ENCODE measurements at regions of chr2 and their contacts with region 1.

Region 1: GRCh38 chr2:197499594-197500526 is at the starts of genes HSPD1 and HSPE1:
- DNase-seq: peak; percentile 97 to 99
- ATAC-seq: peak; percentile 95 to 99 (median 96)
- H3K4me3 ChIP-seq: peak within 1 kb of the TSS; percentile 69 to 97 (median 86)
- H3K27ac ChIP-seq: peak within 1 kb of the TSS; percentile 60 to 98 (median 95)
- H3K4me1 ChIP-seq: peaks cover 3 to 62% (median 51%) of the 10 kb centered on the region in 9 donors
- H3K27me3 ChIP-seq: no peaks in the 10 kb centered on the region
- CTCF ChIP-seq: no peak
- total RNA-seq, gene HSPD1: 104 to 175 (median 135) TPM
- total RNA-seq, gene HSPE1: 73.7 to 157 (median 103) TPM

Region 2: DNA sequence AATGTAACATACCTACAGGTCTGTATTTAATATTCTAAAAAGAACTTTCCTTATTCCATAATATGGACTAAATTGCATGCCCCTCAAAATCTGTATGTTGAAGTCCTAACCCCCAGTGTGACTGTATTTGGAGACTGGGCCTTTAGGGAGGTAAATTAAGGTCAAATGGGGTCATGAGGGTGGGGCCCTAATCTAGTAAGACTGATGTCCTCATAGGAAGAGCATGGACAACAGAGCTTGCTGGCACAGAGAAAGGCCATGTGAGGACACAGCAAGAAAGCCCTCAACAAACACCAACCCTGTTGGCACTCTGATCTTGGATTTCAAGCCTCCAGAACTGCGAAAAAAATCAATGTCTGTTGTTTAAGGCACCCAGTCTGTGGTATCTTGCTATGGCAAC is 83.6 kb before region 1 on chr2:
- intact Hi-C with region 1: loop called in 1 of 10 experiments (anchors 10 kb)
- DNase-seq: no peak
- ATAC-seq: no peak
- H3K4me3 ChIP-seq: no peak overlapping the region
- H3K27ac ChIP-seq: no peak overlapping the region
- H3K4me1 ChIP-seq: peaks cover 0 to 27% (median 4%) of the 10 kb centered on the region in 9 donors
- H3K27me3 ChIP-seq: no peaks in the 10 kb centered on the region
- CTCF ChIP-seq: no peak

Region 3: GRCh38 chr2:197434541-197435513 is 65.0 kb before region 1 on chr2 and contains the start of gene SF3B1:
- intact Hi-C with region 1: loop called in 2 of 10 experiments (anchors 10 kb)
- DNase-seq: peak; percentile 98 to 99
- ATAC-seq: peak; percentile 97 to 99 (median 99)
- H3K4me3 ChIP-seq: peak within 1 kb of the TSS; percentile 69 to 100 (median 88)
- H3K27ac ChIP-seq: peak within 1 kb of the TSS; percentile 90 to 99 (median 96)
- H3K4me1 ChIP-seq: peaks cover 11 to 52% (median 48%) of the 10 kb centered on the region in 9 donors
- H3K27me3 ChIP-seq: no peaks in the 10 kb centered on the region
- CTCF ChIP-seq: no peak
- total RNA-seq, gene SF3B1: 132 to 162 (median 151) TPM

Region 4: DNA sequence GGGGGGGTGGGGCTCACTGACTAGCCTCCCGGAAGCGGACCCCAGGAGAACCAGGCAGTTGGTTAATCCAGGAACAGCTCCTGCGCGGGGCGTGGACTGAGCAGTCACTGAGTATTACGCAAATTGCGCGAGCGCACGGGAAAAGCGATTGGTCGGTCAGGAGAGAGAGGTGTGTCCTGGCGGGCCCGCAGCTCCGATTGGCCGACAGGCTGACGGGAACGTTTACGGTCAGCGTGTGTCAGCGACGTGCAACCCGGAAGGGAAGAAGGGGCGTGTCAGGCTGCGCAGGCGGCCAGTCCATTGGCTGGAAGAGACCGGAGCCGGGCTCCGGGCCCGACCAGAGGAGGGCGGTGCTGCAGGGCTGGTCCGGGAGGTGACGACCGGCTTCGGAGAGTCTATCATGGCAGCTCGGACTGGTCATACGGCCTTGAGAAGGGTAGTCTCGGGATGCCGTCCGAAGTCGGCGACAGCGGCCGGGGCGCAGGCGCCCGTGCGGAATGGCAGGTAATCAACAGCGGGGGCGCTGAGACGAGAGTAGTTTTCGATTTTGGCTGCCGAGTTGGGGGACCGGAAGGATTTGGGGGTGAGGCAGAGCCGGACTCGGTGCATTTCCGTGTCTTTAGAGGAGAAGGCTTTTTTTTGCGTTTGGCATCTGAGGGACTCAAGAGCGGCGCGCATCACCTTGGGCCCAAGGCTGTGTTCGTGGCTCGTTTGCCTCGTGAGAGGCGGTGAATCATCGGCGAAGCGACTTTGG is 46.5 kb before region 1 on chr2 and contains the start of gene COQ10B:
- intact Hi-C with region 1: loop called in 4 of 10 experiments (anchors 1 to 5 kb)
- DNase-seq: peak; percentile 99
- ATAC-seq: peak; percentile 97 to 99 (median 98)
- H3K4me3 ChIP-seq: peak within 1 kb of the TSS; percentile 52 to 92 (median 74)
- H3K27ac ChIP-seq: peak within 1 kb of the TSS; percentile 83 to 100 (median 98)
- H3K4me1 ChIP-seq: peaks cover 0 to 42% (median 20%) of the 10 kb centered on the region in 9 donors
- H3K27me3 ChIP-seq: no peaks in the 10 kb centered on the region
- CTCF ChIP-seq: peak; percentile 4 to 70 (median 42)
- total RNA-seq, gene COQ10B: 25.5 to 44.1 (median 33.0) TPM

Region 5: DNA sequence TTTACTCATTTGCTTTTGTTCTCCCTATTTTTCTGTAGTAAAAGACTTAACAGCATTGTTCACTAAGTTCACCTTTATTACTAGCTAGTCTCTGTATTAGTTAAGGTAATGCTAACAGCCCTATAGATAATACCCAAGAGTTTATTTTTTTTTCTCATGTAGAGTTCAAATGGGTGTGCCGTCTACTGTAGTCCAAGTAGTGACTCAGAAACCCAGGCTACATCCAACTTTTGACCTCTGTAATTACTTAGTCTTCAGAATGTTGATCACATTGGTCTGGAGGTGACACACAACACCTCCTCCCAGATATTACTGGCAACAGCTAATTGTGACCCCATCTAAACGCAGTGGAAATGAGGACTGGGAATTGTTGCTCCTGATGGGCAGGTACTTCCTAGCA is 38.8 kb before region 1 on chr2:
- intact Hi-C with region 1: loop called in 2 of 10 experiments (anchors 5 kb)
- DNase-seq: no peak
- ATAC-seq: peak in 4 of 8 donors; percentile 20 to 76 (median 36)
- H3K4me3 ChIP-seq: no peak overlapping the region
- H3K27ac ChIP-seq: no peak overlapping the region
- H3K4me1 ChIP-seq: peaks cover 3 to 43% (median 12%) of the 10 kb centered on the region in 9 donors
- H3K27me3 ChIP-seq: no peaks in the 10 kb centered on the region
- CTCF ChIP-seq: no peak

Region 6: DNA sequence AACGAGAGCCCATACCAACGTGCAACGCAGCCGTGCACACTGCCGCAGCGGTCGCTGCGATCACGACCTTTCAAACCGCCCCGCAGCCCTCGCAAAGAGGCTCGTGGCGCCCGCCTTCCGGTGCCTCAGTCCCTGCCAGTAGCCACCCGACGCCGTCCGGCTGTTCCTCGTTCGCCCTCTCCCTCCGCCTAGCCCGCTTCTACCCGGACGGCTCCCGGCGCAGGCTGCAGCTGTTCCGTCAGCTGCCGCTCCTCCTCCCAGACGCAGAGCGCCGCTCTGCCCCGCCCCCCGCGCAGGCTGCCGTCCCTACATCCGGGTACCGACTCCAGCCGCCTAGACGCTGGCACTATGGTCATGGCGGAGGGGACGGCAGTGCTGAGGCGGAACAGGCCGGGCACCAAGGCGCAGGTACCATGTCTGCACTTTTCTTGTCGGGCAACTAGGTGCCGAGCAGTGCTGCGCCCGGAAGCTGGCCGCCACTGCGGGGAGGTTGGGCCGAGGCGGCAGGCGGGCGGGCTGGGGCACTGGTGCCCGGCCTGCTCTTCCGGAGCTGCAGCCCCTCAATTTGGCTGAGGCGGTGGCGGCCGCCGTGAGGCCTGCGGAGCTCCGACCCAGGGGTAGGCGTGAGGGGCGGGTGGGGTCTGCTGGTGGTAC is 16.0 kb after region 1 on chr2 and contains the start of gene MOB4:
- intact Hi-C with region 1: loop called in 6 of 10 experiments (anchors 1 to 2 kb)
- DNase-seq: peak; percentile 95 to 97
- ATAC-seq: peak; percentile 98 to 100 (median 99)
- H3K4me3 ChIP-seq: peak within 1 kb of the TSS; percentile 78 to 96 (median 84)
- H3K27ac ChIP-seq: peak within 1 kb of the TSS; percentile 90 to 99 (median 94)
- H3K4me1 ChIP-seq: peaks cover 0 to 43% (median 30%) of the 10 kb centered on the region in 9 donors
- H3K27me3 ChIP-seq: no peaks in the 10 kb centered on the region
- CTCF ChIP-seq: peak in 1 of 9 donors; percentile 23
- total RNA-seq, gene MOB4: 20.9 to 43.2 (median 30.5) TPM

Region 7: DNA sequence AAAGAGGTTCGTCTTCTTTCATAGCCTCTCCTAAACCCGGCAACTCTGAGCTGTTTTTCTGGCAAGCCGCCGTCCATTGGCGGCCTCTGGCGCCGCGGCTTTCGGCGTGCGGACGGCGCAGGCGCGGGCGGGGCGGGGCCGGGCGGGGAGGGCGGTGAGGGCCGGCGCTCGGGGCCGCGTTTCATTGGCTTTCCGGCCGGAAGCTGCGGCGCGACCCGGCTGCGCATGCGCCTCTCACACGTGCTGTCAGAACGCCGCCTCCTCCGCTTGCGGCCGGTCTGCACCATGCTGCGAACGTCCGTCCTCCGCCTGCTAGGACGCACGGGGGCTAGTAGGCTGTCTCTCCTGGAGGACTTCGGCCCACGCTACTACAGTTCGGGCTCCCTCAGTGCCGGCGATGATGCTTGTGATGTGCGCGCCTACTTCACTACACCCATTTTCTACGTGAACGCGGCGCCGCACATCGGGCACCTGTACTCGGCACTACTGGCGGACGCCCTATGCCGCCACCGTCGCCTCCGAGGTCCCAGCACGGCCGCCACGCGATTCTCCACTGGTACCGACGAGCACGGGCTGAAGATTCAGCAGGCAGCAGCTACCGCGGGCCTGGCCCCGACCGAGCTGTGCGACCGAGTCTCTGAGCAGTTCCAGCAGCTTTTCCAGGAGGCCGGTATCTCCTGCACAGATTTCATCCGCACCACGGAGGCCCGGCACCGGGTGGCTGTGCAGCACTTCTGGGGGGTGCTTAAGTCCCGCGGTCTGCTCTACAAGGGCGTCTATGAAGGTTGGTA is 205.5 kb after region 1 on chr2 and contains the start of gene MARS2:
- intact Hi-C with region 1: loop called in 3 of 10 experiments (anchors 2 to 10 kb)
- DNase-seq: peak; percentile 92 to 96
- ATAC-seq: peak; percentile 94 to 99 (median 98)
- H3K4me3 ChIP-seq: peak within 1 kb of the TSS; percentile 59 to 99 (median 92)
- H3K27ac ChIP-seq: peak within 1 kb of the TSS; percentile 43 to 91 (median 85)
- H3K4me1 ChIP-seq: peaks cover 2 to 47% (median 40%) of the 10 kb centered on the region in 9 donors
- H3K27me3 ChIP-seq: no peaks in the 10 kb centered on the region
- CTCF ChIP-seq: peak in 2 of 9 donors; percentile 8 to 19
- total RNA-seq, gene MARS2: 5.0 to 11.5 (median 7.7) TPM

Measured in heart right ventricle (tissue), 16 donors.